ENCODE measurements at regions of chr15 and their contacts with region 1.

Region 1: GRCh38 chr15:90716976-90717821 is at the start of gene BLM:
- DNase-seq: peak; percentile 97
- H3K4me3 Mint-ChIP-seq: peak within 1 kb of the TSS; percentile 77
- H3K27ac Mint-ChIP-seq: peak within 1 kb of the TSS; percentile 97
- H3K4me1 Mint-ChIP-seq: peaks cover 29% of the 10 kb centered on the region
- H3K27me3 Mint-ChIP-seq: no peaks in the 10 kb centered on the region
- total RNA-seq, gene BLM: 50.2 to 57.7 TPM

Region 2: GRCh38 chr15:90729261-90729660 is 12.1 kb after region 1 on chr15:
- CTCF ChIA-PET with region 1: interaction called, 11 read pairs
- POLR2A ChIA-PET with region 1: interaction called, 4 read pairs
- DNase-seq: no peak
- H3K4me3 Mint-ChIP-seq: no peak overlapping the region
- H3K27ac Mint-ChIP-seq: no peak overlapping the region
- H3K4me1 Mint-ChIP-seq: peaks cover 17% of the 10 kb centered on the region
- H3K27me3 Mint-ChIP-seq: no peaks in the 10 kb centered on the region